ENCODE measurements at regions of chr18 and their contacts with region 1.

Region 1: GRCh38 chr18:48230467-48231113 is 178.6 kb downstream of the ZBTB7C start:
- DNase-seq: peak; percentile 36
- H3K4me3 ChIP-seq: no peak overlapping the region
- H3K27ac ChIP-seq: no peak overlapping the region
- H3K4me1 ChIP-seq: no peaks in the 10 kb centered on the region
- H3K27me3 ChIP-seq: no peaks in the 10 kb centered on the region
- CTCF ChIP-seq: peak in 3 of 4 experiments; percentile 45 to 57 (median 46)
- POLR2A ChIP-seq: no peak

Region 2: DNA sequence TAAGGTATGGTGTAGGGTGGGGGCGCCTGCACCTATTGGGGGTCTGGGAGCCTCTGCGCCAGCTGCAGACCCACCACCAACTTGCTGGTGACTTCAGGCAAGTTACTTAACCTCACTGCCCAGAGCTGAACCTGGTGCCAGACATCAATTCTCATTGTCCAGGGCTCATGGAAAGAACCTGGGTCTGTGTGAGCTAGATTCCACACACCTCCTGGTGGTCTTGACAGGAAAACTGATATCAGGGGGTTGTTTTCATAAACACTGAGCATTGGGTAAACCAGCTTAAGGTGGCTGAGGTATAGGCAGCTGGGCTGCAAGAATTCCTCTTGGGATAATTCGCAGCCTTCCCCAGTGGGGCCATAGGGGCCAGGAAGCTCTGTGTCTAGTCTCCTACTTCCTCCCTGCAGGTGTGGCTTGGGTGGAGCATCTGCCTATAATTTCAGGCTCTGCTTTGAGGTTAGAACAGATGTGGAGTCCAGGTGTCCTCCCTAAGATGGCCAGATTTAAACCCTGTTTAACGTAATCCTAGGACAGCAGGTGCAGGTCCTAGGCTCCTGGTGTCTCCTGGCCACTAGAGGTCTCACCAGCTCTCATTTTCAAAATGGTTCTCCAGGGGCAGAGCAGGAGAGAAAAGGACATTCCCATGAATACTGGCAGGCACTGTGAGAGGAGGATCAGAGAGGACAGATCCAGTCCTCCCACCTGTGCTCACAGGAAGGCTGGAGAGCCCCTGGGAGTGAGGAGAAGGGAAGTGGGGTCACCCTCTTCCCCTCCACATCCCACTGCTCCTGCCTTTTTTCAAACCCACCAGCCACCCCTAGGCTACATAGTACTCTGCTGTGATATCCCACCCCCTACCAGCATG is 199.7 kb before region 1 on chr18:
- intact Hi-C with region 1: no loop called
- DNase-seq: peak; percentile 66
- H3K4me3 ChIP-seq: no peak overlapping the region
- H3K27ac ChIP-seq: no peak overlapping the region
- H3K4me1 ChIP-seq: no peaks in the 10 kb centered on the region
- H3K27me3 ChIP-seq: no peaks in the 10 kb centered on the region
- CTCF ChIP-seq: peak; percentile 61 to 83 (median 72)
- POLR2A ChIP-seq: no peak

Region 3: GRCh38 chr18:48445540-48445939 is 214.9 kb after region 1 on chr18:
- intact Hi-C with region 1: loop called (anchors 5 kb)
- DNase-seq: peak; percentile 57
- H3K4me3 ChIP-seq: no peak overlapping the region
- H3K27ac ChIP-seq: no peak overlapping the region
- H3K4me1 ChIP-seq: no peaks in the 10 kb centered on the region
- H3K27me3 ChIP-seq: no peaks in the 10 kb centered on the region
- CTCF ChIP-seq: peak; percentile 44 to 92 (median 58)
- POLR2A ChIP-seq: no peak